ENCODE measurements at regions of chr1 and their contacts with region 1.

Region 1: DNA sequence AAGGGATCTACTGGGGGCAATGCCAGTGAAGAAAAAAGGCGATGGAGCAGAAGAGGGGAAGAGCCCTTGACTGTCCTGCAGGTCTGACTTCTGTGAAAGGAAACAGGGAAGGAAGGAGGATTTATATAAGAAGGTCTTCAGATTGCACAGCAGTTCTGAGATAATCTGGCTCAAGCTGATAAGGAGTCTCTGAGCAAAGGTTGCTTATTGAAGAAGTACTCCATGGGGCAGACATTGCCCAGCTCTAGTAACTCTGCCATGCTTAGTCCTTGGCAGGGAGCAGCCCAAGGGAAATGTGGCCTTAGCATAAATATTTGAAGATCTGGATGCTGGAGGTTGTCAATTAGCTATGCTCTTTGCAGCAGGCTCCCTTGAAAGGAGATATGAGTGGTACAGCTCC is 15.9 kb upstream of the TTF2 start:
- DNase-seq: no peak
- H3K4me3 ChIP-seq: no peak overlapping the region
- H3K27ac ChIP-seq: no peak overlapping the region
- H3K4me1 ChIP-seq: no peaks in the 10 kb centered on the region
- H3K27me3 ChIP-seq: peaks cover 0 to 2% of the 10 kb centered on the region in 2 experiments
- CTCF ChIP-seq: no peak
- POLR2A ChIP-seq: no peak

Region 2: GRCh38 chr1:116919802-116920201 is 124.4 kb before region 1 on chr1:
- CTCF ChIA-PET with region 1: no interaction called
- POLR2A ChIA-PET with region 1: no interaction called
- dilution Hi-C with region 1: no loop called
- intact Hi-C with region 1: loop called (anchors 5 kb)
- DNase-seq: no peak
- H3K4me3 ChIP-seq: no peak overlapping the region
- H3K27ac ChIP-seq: no peak overlapping the region
- H3K4me1 ChIP-seq: peaks cover 15% of the 10 kb centered on the region
- H3K27me3 ChIP-seq: no peaks in the 10 kb centered on the region
- CTCF ChIP-seq: no peak
- POLR2A ChIP-seq: no peak

Measured in endothelial cell of umbilical vein (primary cell).